ENCODE measurements at regions of chr1 and their contacts with region 1.

Region 1: DNA sequence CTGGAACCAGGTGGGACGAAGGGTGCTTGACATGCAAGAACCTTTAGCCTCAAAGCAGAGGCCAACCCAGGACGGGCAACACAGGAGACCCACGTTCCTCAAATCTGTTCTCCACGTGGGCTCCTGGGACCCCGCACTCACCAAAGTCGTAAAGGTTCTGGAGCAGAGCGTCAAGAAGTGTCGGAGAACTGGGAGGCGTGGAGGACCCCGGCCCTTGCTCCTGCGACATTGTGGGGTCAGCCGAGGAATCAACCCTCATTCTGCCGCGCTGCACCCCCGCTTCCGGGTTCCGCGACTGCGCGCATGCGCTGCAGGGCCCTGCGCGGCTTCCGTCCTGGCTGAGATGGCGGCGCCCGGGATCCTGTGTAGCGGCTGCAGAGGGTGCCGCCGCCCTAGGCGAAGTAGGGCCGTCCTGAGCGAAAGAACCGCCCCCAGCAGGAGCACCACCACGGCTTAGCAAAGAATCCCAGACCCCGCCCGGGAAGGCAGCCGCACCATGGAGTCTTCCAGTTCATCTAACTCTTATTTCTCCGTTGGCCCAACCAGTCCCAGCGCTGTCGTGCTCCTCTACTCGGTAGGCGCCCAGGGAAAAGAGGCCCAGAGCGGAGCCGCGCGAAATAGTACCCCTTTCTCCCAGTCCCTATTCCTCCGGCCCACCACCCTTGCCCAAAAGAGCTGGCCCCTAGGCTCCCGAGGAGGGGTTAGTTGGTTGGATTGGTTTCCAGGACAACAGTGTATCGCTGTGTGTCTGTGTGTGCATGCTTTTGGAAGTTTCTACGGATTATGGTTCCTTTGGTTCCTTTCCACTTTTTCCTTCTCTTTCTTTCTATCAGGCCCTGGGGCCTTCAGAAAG is at the start of gene GNPAT:
- DNase-seq: peak; percentile 97
- H3K27ac ChIP-seq: peak within 1 kb of the TSS; percentile 85
- CTCF ChIP-seq: no peak

Region 2: GRCh38 chr1:231020139-231020601 is 220.9 kb before region 1 on chr1:
- CTCF ChIA-PET with region 1: no interaction called
- POLR2A ChIA-PET with region 1: no interaction called
- DNase-seq: peak; percentile 46
- H3K27ac ChIP-seq: no peak overlapping the region
- CTCF ChIP-seq: no peak

Region 3: DNA sequence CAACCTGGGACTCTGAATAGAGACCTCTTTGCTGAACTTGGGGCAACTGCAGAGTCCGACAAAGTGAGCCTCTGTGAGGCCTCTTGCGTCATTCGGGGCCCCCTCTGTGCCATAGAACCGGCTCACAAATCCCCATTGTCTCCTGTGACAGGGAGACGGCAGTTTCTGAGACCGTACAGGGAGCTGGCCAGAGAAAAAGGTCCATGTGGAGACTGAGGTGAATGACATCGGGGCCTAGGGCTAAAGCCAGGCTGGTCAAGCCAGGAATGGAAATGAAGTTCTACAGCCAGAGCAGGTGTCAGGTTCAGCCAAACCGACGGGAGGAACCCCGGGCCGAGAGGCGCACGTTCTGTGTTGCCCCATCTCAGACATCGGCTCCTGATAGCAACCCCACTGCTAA is 116.4 kb before region 1 on chr1:
- CTCF ChIA-PET with region 1: no interaction called
- POLR2A ChIA-PET with region 1: no interaction called
- DNase-seq: no peak
- H3K27ac ChIP-seq: no peak overlapping the region
- CTCF ChIP-seq: no peak

Region 4: GRCh38 chr1:231252341-231252740 is 11.2 kb after region 1 on chr1:
- CTCF ChIA-PET with region 1: interaction called, 4 read pairs
- POLR2A ChIA-PET with region 1: interaction called, 10 read pairs
- DNase-seq: peak; percentile 8
- H3K27ac ChIP-seq: no peak overlapping the region
- CTCF ChIP-seq: no peak

Region 5: DNA sequence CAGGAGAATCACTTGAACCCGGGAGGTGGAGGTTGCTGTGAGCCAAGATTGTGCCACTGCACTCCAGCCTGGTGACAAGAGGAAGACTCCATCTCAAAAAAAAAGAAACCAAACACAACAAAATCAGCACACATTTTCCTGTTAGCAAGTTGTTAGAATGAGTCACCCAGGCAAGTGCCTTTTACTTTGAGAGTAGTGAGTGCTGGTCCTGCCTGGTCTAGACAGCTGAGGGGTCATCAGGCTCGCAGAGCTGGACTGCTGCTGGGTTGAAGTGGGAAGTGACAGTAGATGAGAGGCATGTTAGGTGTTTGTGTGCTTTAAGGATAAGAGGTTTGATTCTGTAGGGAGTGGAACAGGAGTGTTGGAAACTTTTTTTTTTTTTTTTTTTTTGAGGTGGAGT is 31.8 kb after region 1 on chr1:
- CTCF ChIA-PET with region 1: no interaction called
- POLR2A ChIA-PET with region 1: no interaction called
- DNase-seq: no peak
- H3K27ac ChIP-seq: no peak overlapping the region
- CTCF ChIP-seq: no peak

Measured in RWPE1 (cell line).